Panc1 (cell line): ENCODE measurements at regions of chr1 and their contacts with region 1.

Region 1: GRCh38 chr1:16946646-16947045 is 24.9 kb downstream of the CROCC start:
- DNase-seq: no peak
- ATAC-seq: no peak
- H3K4me3 ChIP-seq: no peak overlapping the region
- H3K27ac ChIP-seq: no peak overlapping the region
- H3K4me1 ChIP-seq: no peaks in the 10 kb centered on the region; the same call in 1 of the 2 replicates
- H3K27me3 ChIP-seq: no peaks in the 10 kb centered on the region
- CTCF ChIP-seq: no peak

Region 2: DNA sequence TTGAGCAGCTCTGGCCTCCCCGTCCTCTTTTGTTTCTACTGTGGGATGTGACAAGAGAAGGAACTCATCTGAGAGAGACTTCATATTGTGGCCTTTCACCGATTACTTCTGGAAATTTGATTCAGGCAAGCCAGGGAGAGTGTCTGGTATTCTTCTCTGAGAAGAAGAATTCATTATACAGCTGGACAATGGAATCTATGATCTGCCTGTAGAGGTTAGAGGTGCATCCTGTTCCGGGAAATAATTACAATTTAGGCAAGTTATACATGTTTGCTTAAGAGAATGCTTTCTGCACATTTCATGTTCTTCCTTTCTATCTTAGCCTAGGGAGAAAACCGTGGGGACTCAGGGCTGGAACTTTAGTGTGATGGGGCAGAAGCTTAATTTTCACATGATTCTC is 63.6 kb before region 1 on chr1:
- CTCF ChIA-PET with region 1: no interaction called
- POLR2A ChIA-PET with region 1: no interaction called
- in situ Hi-C with region 1: no loop called
- intact Hi-C with region 1: no loop called
- DNase-seq: no peak
- ATAC-seq: no peak
- H3K4me3 ChIP-seq: no peak overlapping the region
- H3K27ac ChIP-seq: no peak overlapping the region
- H3K4me1 ChIP-seq: no peaks in the 10 kb centered on the region
- H3K27me3 ChIP-seq: no peaks in the 10 kb centered on the region; the same call in none of the 2 replicates
- CTCF ChIP-seq: no peak

Region 3: GRCh38 chr1:17004466-17005364 is 58.1 kb after region 1 on chr1:
- CTCF ChIA-PET with region 1: interaction called, 12 read pairs
- POLR2A ChIA-PET with region 1: interaction called, 6 read pairs
- in situ Hi-C with region 1: no loop called
- intact Hi-C with region 1: no loop called
- DNase-seq: no peak
- ATAC-seq: peak; percentile 82
- H3K4me3 ChIP-seq: no peak overlapping the region
- H3K27ac ChIP-seq: no peak overlapping the region
- H3K4me1 ChIP-seq: peaks cover 2% of the 10 kb centered on the region; the same call in 1 of the 2 replicates
- H3K27me3 ChIP-seq: no peaks in the 10 kb centered on the region
- CTCF ChIP-seq: no peak; the same call in 1 of the 2 replicates

Region 4: DNA sequence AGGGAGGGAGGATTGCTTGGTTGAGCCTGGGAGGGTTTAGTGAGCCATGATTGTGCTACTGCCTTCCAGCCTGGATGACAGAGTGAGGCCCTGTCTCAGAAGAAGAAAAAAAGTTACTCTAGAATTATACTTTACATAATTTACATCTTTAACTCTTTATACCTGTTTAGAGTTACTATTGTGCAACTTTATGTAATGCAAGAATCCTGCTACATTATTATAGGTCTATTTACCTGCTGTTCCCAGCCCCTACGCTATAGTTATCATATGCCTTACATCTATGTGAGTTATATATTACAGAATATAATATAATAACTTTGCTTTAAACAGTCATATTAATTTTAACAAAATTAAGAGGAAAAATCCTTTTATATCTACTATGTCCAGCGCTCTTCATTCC is 92.9 kb after region 1 on chr1:
- CTCF ChIA-PET with region 1: no interaction called
- POLR2A ChIA-PET with region 1: no interaction called
- in situ Hi-C with region 1: no loop called
- intact Hi-C with region 1: no loop called
- DNase-seq: no peak
- ATAC-seq: no peak
- H3K4me3 ChIP-seq: no peak overlapping the region
- H3K27ac ChIP-seq: no peak overlapping the region
- H3K4me1 ChIP-seq: no peaks in the 10 kb centered on the region
- H3K27me3 ChIP-seq: no peaks in the 10 kb centered on the region
- CTCF ChIP-seq: no peak